ENCODE measurements at regions of chr3 and their contacts with region 1.

Region 1: GRCh38 chr3:9792405-9793160 is at the starts of genes ARPC4 and TADA3:
- DNase-seq: peak; percentile 92 to 97 (median 96)
- H3K4me3 ChIP-seq: peak within 1 kb of the TSS; percentile 91 to 100
- H3K4me3 Mint-ChIP-seq: peak within 1 kb of the TSS; percentile 96 to 99 (median 98)
- H3K27ac ChIP-seq: peak within 1 kb of the TSS; percentile 99
- H3K27ac Mint-ChIP-seq: peak within 1 kb of the TSS; percentile 97 to 99 (median 99)
- H3K4me1 ChIP-seq: peaks cover 63% of the 10 kb centered on the region
- H3K4me1 Mint-ChIP-seq: peaks cover 47 to 80% (median 56%) of the 10 kb centered on the region in 4 donors
- H3K27me3 ChIP-seq: no peaks in the 10 kb centered on the region
- H3K27me3 Mint-ChIP-seq: no peaks in the 10 kb centered on the region
- total RNA-seq, gene ARPC4: 164 to 168 TPM
- total RNA-seq, gene TADA3: 37.6 to 41.4 TPM

Region 2: GRCh38 chr3:9649791-9650521 is 142.6 kb before region 1 on chr3:
- CTCF ChIA-PET with region 1: interaction called, 4 read pairs
- POLR2A ChIA-PET with region 1: interaction called, 24 read pairs
- intact Hi-C with region 1: loop called (anchors 1 kb)
- DNase-seq: peak in 1 of 5 donors; percentile 46
- H3K4me3 ChIP-seq: peak overlapping the region; percentile 97
- H3K4me3 Mint-ChIP-seq: peak overlapping the region; percentile 91 to 99 (median 96)
- H3K27ac ChIP-seq: peak overlapping the region; percentile 77
- H3K27ac Mint-ChIP-seq: peak overlapping the region; percentile 89 to 97 (median 91)
- H3K4me1 ChIP-seq: peaks cover 37% of the 10 kb centered on the region
- H3K4me1 Mint-ChIP-seq: peaks cover 19 to 50% (median 30%) of the 10 kb centered on the region in 4 donors
- H3K27me3 ChIP-seq: no peaks in the 10 kb centered on the region
- H3K27me3 Mint-ChIP-seq: peaks cover 0 to 1% of the 10 kb centered on the region in 2 donors

Region 3: GRCh38 chr3:9769426-9770275 is 22.9 kb before region 1 on chr3 and contains the start of gene CAMK1:
- CTCF ChIA-PET with region 1: no interaction called
- POLR2A ChIA-PET with region 1: interaction called, 10 read pairs
- intact Hi-C with region 1: no loop called
- DNase-seq: peak in 4 of 5 donors; percentile 42 to 56 (median 47)
- H3K4me3 ChIP-seq: peak within 1 kb of the TSS in 1 of 2 donors; percentile 45
- H3K4me3 Mint-ChIP-seq: peak within 1 kb of the TSS; percentile 66 to 77 (median 76)
- H3K27ac ChIP-seq: no peak within 1 kb of the TSS
- H3K27ac Mint-ChIP-seq: peak within 1 kb of the TSS in 5 of 7 donors; percentile 66 to 91 (median 76)
- H3K4me1 ChIP-seq: peaks cover 21% of the 10 kb centered on the region
- H3K4me1 Mint-ChIP-seq: peaks cover 12 to 36% (median 21%) of the 10 kb centered on the region in 4 donors
- H3K27me3 ChIP-seq: no peaks in the 10 kb centered on the region
- H3K27me3 Mint-ChIP-seq: no peaks in the 10 kb centered on the region
- total RNA-seq, gene CAMK1: 2.1 to 2.6 TPM

Region 4: GRCh38 chr3:9803494-9803893 is 10.9 kb after region 1 on chr3:
- CTCF ChIA-PET with region 1: interaction called, 15 read pairs
- POLR2A ChIA-PET with region 1: interaction called, 60 read pairs
- intact Hi-C with region 1: loop called (anchors 1 kb)
- DNase-seq: no peak
- H3K4me3 ChIP-seq: no peak overlapping the region
- H3K4me3 Mint-ChIP-seq: no peak overlapping the region
- H3K27ac ChIP-seq: no peak overlapping the region
- H3K27ac Mint-ChIP-seq: peak overlapping the region in 4 of 7 donors; percentile 17 to 52 (median 44)
- H3K4me1 ChIP-seq: peaks cover 10% of the 10 kb centered on the region
- H3K4me1 Mint-ChIP-seq: peaks cover 15 to 24% (median 19%) of the 10 kb centered on the region in 4 donors
- H3K27me3 ChIP-seq: no peaks in the 10 kb centered on the region
- H3K27me3 Mint-ChIP-seq: no peaks in the 10 kb centered on the region

Region 5: GRCh38 chr3:9843715-9844438 is 51.3 kb after region 1 on chr3 and contains the start of gene RPUSD3:
- CTCF ChIA-PET with region 1: no interaction called
- POLR2A ChIA-PET with region 1: interaction called, 15 read pairs
- intact Hi-C with region 1: loop called (anchors 1 kb)
- DNase-seq: peak; percentile 92 to 98 (median 93)
- H3K4me3 ChIP-seq: peak within 1 kb of the TSS; percentile 80 to 92
- H3K4me3 Mint-ChIP-seq: peak within 1 kb of the TSS; percentile 96 to 99 (median 97)
- H3K27ac ChIP-seq: peak within 1 kb of the TSS; percentile 65
- H3K27ac Mint-ChIP-seq: peak within 1 kb of the TSS; percentile 87 to 97 (median 92)
- H3K4me1 ChIP-seq: peaks cover 23% of the 10 kb centered on the region
- H3K4me1 Mint-ChIP-seq: peaks cover 10 to 36% (median 21%) of the 10 kb centered on the region in 4 donors
- H3K27me3 ChIP-seq: no peaks in the 10 kb centered on the region
- H3K27me3 Mint-ChIP-seq: no peaks in the 10 kb centered on the region
- total RNA-seq, gene RPUSD3: 63.3 to 67.6 TPM